Natural killer cell (primary cell): ENCODE measurements at regions of chr2 and their contacts with region 1.

Region 1: GRCh38 chr2:176454893-176455811 is 185.9 kb downstream of the MTX2 start:
- DNase-seq: peak; percentile 72 to 80
- ATAC-seq: peak; percentile 76 to 87 (median 80)
- H3K4me3 ChIP-seq: no peak overlapping the region
- H3K4me3 Mint-ChIP-seq: no peak overlapping the region
- H3K27ac ChIP-seq: no peak overlapping the region
- H3K27ac Mint-ChIP-seq: no peak overlapping the region
- H3K4me1 ChIP-seq: no peaks in the 10 kb centered on the region
- H3K4me1 Mint-ChIP-seq: no peaks in the 10 kb centered on the region
- H3K27me3 ChIP-seq: peaks cover 8% of the 10 kb centered on the region
- H3K27me3 Mint-ChIP-seq: peaks cover 29 to 38% of the 10 kb centered on the region in 2 donors
- CTCF ChIP-seq: peak; percentile 97

Region 2: DNA sequence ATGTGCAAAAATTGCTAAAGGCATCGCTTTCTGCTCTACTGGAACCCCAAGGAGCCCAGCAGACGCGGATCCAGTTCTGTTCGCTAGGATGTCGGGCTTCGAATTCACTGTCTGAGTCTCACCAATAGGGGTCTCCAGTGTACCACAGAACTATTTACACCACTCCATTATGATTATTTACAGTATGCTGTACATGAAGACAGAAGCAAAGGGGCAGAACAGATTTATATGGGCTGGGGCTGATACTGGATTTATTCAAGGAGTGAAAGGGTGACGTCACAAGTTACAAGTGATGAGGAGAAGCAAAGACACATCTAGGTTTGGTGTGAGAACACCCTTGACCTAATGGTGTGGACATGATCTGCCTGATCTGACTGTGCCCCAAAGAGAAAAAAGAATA is 1088.3 kb before region 1 on chr2:
- intact Hi-C with region 1: loop called (anchors 1 kb)
- DNase-seq: peak in 1 of 2 donors; percentile 48
- ATAC-seq: peak; percentile 55 to 79 (median 76)
- H3K4me3 ChIP-seq: no peak overlapping the region
- H3K4me3 Mint-ChIP-seq: no peak overlapping the region
- H3K27ac ChIP-seq: no peak overlapping the region
- H3K27ac Mint-ChIP-seq: no peak overlapping the region
- H3K4me1 ChIP-seq: no peaks in the 10 kb centered on the region
- H3K4me1 Mint-ChIP-seq: no peaks in the 10 kb centered on the region
- H3K27me3 ChIP-seq: peaks cover 18% of the 10 kb centered on the region
- H3K27me3 Mint-ChIP-seq: peaks cover 20 to 32% of the 10 kb centered on the region in 2 donors
- CTCF ChIP-seq: peak; percentile 68

Region 3: DNA sequence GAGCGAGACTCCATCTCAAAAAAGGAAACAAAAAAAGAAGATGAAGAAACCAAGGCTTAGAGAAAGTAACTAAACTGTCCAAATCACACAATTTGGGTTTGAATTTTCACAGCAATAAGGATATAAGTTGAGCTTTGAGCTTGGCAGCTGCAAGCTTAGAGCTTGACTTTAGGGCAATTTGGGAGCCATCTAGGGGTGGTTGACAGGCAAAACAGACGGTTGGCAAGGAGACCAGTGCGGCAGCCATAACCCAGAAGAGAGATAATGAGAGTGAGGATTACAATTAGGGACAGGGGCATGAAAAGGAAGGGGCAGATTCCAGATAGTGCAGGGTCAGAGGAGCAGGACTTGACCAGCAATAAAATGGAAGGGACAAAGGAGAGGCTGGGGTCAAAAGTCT is 375.2 kb after region 1 on chr2:
- intact Hi-C with region 1: no loop called
- DNase-seq: peak in 1 of 2 donors; percentile 56
- ATAC-seq: peak in 1 of 3 donors; percentile 64
- H3K4me3 ChIP-seq: no peak overlapping the region
- H3K4me3 Mint-ChIP-seq: no peak overlapping the region
- H3K27ac ChIP-seq: no peak overlapping the region
- H3K27ac Mint-ChIP-seq: peak overlapping the region in 1 of 2 donors; percentile 37
- H3K4me1 ChIP-seq: peaks cover 2% of the 10 kb centered on the region
- H3K4me1 Mint-ChIP-seq: peaks cover 15 to 19% of the 10 kb centered on the region in 2 donors
- H3K27me3 ChIP-seq: no peaks in the 10 kb centered on the region
- H3K27me3 Mint-ChIP-seq: peaks cover 0 to 8% of the 10 kb centered on the region in 2 donors
- CTCF ChIP-seq: no peak